Right ventricle myocardium inferior (tissue), 1 donor: ENCODE measurements at regions of chr14 and their contacts with region 1.

Region 1: DNA sequence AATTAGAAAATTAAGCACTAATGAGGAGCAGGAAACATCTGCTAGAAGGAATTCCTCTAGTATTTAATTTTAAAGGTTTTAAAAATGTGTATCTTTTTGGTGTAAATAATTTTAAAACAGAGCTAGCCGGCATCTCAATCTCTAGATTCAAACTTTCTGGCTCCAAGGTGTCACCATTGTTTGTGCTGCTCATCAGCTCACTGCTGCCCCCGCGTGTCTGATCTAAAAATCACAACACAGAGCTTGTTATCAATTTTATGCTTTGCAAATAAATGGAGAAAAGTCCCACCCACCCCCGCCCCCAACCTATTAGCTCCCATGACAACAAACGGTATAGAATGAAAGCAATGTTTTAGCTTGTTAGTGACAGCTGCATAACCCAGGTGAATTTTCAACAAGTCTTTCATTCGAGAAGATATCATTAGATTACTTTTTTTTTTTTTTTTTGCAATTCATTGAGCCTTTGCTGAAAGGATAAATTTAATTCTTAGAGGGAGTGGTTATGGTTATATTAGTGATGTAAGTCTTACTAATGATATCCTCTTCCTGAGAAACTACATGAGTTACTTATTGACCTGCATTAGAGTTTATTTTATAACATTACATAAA is 11.3 kb upstream of the ABHD12B start:
- DNase-seq: peak; percentile 89
- ATAC-seq: peak; percentile 70

Region 2: DNA sequence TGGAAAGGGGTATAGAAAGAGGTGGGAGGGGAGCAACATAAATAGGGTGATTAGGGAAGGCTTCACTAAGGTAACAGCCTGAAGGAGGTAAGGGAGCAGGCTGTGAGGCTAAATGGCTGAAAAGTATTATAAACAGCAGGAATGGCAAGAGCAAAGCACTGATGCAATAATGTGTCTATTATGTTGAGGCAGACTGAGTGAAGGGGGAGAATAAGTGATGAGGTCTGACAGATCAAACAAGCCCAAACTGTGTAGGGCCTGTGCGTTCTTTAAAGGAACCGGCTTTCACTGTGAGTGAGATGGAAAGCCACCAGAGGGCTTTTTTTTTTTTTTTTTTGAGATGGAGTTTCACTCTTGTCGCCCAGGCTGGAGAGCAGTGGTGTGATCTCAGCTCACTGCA is 737.5 kb before region 1 on chr14:
- intact Hi-C with region 1: no loop called
- DNase-seq: no peak
- ATAC-seq: no peak

Region 3: GRCh38 chr14:50578433-50578832 is 282.1 kb before region 1 on chr14:
- intact Hi-C with region 1: no loop called
- DNase-seq: no peak
- ATAC-seq: no peak

Region 4: GRCh38 chr14:50599700-50600444 is 260.7 kb before region 1 on chr14:
- intact Hi-C with region 1: loop called (anchors 2 kb)
- DNase-seq: no peak
- ATAC-seq: peak; percentile 62

Region 5: DNA sequence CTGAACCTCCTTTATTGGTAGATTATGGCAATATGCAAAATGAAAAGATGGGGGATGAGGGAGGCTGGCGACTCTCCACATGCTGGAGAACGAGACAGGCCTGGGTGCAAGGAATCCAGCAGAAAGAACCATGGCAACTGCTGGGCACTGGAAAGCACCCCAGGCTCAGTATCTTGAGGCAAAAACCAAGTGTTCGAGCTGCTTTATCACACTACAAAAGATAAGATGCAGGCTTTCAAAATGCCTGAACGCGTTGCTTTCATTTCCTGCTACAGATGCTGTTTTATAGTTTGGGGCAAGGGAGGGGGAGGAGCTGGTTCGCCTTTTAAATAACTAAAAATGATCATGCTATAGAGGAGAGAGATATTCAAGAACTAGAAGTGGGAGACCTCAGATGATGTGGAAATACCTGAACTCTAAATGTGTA is 68.5 kb before region 1 on chr14:
- intact Hi-C with region 1: loop called (anchors 5 kb)
- DNase-seq: no peak
- ATAC-seq: no peak

Region 6: GRCh38 chr14:50830932-50831725 is 29.5 kb before region 1 on chr14 and contains the start of gene NIN:
- intact Hi-C with region 1: loop called (anchors 1 kb)
- DNase-seq: peak; percentile 94
- ATAC-seq: peak; percentile 98
- total RNA-seq, gene NIN: 22.2 TPM